ENCODE measurements at regions of chr2 and their contacts with region 1.

Region 1: DNA sequence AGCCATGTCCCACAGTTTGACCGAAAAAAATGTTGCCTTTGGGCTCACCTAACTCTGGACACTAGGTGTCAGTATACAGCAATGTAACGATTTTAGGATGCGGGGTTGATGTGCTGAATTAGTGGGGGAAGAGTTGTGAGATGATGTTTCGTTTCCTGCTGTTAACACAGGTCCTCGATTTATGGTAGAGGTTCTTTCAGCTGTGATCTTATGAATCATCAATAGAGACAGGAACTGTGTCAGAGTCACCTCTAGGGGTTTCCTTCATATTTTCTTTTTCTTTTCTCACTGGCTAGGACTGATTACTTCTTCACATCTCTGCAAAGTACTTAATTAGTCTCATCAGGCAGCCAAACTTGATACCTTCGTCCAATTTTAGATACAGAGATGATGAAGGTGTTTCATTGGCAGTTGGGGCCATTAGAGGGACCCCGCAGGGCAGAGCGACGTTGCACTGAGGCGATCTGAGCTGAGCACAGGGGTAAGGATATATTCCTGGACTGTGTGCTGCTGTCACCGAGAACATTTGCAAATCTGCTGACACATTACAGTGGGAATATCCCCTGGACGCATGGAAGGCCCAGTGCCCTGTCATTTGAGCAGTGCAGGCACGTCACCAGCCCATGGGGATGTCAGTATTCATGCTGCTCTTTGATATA is 10.2 kb upstream of the MMADHC start:
- DNase-seq: peak; percentile 94
- ATAC-seq: peak; percentile 89
- H3K4me3 ChIP-seq: peak overlapping the region; percentile 13; the same call in 1 of the 2 replicates
- H3K27ac ChIP-seq: peak overlapping the region; percentile 64
- H3K4me1 ChIP-seq: peaks cover 8% of the 10 kb centered on the region
- H3K27me3 ChIP-seq: no peaks in the 10 kb centered on the region
- CTCF ChIP-seq: peak; percentile 93
- POLR2A ChIP-seq: 0 out of 2 replicates have a peak, but pooled peaks have one; percentile 40
- RAD21 ChIP-seq: peak; percentile 97

Region 2: DNA sequence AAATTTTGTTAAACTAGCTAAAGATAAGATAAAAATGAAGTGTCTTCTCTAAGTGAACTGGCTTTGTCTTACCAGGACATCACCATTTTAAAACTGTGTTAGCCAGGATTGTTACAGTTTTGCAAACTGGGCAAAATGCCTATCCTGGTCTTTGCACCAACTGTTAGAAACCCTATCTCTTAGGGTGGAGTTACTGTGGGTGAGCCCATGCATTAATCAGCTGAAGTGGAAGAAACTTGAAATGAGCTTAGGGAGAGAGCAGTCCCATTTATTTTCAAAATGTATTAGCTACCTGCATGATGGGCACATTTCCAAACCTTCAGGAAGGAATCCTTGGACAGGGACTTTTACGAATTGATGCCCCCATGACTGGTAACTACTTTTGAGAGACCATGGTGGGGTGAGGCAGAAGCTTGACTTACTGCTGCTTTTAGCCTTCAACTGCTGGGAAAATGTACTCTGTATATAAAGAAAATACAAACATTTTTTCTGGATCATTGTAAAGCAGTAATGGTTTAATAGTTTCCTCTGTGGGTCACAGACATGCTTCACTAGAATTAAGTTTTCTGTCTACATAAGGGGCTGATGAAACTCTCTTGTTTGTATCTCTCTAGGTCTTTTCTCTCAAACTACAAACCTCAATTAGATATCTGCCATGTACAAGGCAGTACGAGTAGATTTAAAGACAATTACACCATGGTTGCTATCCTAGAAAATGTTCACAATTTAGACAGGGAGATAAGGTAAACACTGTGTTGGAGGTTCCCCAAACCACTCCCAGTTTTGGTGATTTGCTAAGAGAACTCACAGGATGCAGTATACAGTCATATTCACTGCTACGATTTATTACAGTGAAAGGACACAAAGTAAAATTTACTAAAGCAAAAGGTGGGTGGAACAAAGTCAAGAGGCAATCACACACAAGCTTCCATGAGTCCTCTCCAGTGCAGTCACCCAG is 311.2 kb after region 1 on chr2:
- CTCF ChIA-PET with region 1: no interaction called
- POLR2A ChIA-PET with region 1: no interaction called
- dilution Hi-C with region 1: no loop called
- in situ Hi-C with region 1: no loop called
- intact Hi-C with region 1: loop called (anchors 10 kb)
- DNase-seq: peak; percentile 81
- ATAC-seq: peak; percentile 96
- H3K4me3 ChIP-seq: no peak overlapping the region
- H3K27ac ChIP-seq: peak overlapping the region; percentile 27; the same call in 1 of the 2 replicates
- H3K4me1 ChIP-seq: peaks cover 9% of the 10 kb centered on the region
- H3K27me3 ChIP-seq: no peaks in the 10 kb centered on the region
- CTCF ChIP-seq: no peak
- POLR2A ChIP-seq: no peak
- RAD21 ChIP-seq: no peak

Region 3: GRCh38 chr2:150125708-150126107 is 527.9 kb after region 1 on chr2:
- CTCF ChIA-PET with region 1: no interaction called
- POLR2A ChIA-PET with region 1: no interaction called
- dilution Hi-C with region 1: no loop called
- in situ Hi-C with region 1: no loop called
- intact Hi-C with region 1: loop called (anchors 10 kb)
- DNase-seq: peak; percentile 86
- ATAC-seq: peak; percentile 65
- H3K4me3 ChIP-seq: no peak overlapping the region
- H3K27ac ChIP-seq: no peak overlapping the region
- H3K4me1 ChIP-seq: peaks cover 13% of the 10 kb centered on the region
- H3K27me3 ChIP-seq: no peaks in the 10 kb centered on the region
- CTCF ChIP-seq: peak; percentile 21; the same call in 1 of the 2 replicates
- POLR2A ChIP-seq: no peak
- RAD21 ChIP-seq: peak; percentile 35; the same call in 1 of the 2 replicates

Region 4: DNA sequence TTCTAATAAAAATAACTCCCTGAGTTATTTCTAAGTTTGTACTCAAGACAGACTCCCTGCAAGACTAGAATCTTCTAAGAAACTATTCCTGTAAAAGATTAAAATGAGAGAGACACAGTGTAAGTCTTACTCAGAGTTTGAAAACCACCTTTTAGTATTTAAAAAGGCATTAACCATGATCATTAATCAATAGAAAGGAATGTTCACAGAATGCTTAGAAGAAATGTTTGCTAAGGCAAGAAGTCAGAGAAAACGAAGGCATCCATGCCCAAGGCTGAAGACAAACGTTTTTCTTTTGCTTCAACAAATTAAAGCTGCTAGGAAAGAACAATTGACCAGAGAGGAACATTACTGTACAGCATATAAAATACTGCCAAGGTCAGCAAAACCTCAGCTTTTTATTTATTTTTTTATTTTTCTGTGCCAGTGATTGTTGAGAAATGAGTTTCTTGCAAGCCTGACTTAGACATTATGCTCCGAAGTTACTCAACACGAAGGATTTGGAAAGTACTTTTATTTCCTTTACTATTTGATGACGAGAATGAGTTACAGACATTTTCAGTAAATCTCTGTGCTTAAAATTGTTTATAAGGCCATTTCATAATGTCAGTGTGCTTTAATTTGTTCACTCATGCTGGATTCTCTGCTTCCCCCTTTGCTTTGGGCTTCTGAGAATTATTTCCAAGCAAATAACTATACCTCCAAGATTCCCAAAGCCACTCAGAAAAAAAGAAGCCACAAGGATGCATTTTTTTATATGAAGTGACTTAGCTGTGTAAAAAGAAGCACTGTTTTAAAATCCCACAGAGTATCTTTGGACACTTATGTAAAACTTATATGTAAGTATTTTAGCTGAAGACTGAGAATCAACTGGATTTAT is 869.2 kb after region 1 on chr2:
- CTCF ChIA-PET with region 1: interaction called, 4 read pairs
- POLR2A ChIA-PET with region 1: no interaction called
- dilution Hi-C with region 1: no loop called
- in situ Hi-C with region 1: loop called (anchors 5 kb)
- intact Hi-C with region 1: loop called (anchors 1 kb)
- DNase-seq: peak; percentile 86
- ATAC-seq: peak; percentile 36
- H3K4me3 ChIP-seq: no peak overlapping the region
- H3K27ac ChIP-seq: peak overlapping the region; percentile 42; the same call in 1 of the 2 replicates
- H3K4me1 ChIP-seq: peaks cover 5% of the 10 kb centered on the region
- H3K27me3 ChIP-seq: no peaks in the 10 kb centered on the region
- CTCF ChIP-seq: no peak
- POLR2A ChIP-seq: peak; percentile 2; the same call in 1 of the 2 replicates
- RAD21 ChIP-seq: no peak

Region 5: DNA sequence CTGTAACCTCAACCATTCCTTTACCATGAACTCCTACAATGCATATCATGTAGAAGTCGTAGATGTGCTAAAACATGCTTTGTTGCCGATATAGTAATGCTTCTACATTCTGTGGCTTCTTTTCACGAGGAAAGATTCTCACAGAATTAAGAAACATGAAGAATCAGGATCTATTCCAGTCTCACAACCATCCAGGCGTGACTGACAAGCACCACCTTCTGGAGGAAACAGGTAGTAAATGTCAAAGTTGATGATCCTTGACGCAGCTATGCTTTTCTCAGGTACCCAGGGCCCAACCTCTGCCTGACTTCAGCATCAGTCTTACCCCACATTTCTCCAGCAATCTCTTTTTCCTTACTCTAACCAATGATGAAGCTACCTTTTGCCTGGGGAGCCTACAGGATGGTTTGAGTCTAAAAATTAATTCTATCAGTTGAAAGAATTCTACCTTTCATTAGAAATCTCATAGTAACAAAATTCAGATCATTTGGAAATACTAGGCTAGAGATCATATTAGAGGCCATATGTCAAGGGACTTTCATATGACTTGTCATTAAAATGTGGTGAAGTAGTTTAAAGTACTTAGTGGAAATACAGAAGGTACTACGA is 1013.0 kb after region 1 on chr2:
- CTCF ChIA-PET with region 1: no interaction called
- POLR2A ChIA-PET with region 1: no interaction called
- dilution Hi-C with region 1: no loop called
- in situ Hi-C with region 1: loop called (anchors 10 kb)
- intact Hi-C with region 1: loop called (anchors 2 kb)
- DNase-seq: peak; percentile 69
- ATAC-seq: peak; percentile 16; the same call in 1 of the 2 replicates
- H3K4me3 ChIP-seq: no peak overlapping the region
- H3K27ac ChIP-seq: peak overlapping the region; percentile 49; the same call in 1 of the 2 replicates
- H3K4me1 ChIP-seq: peaks cover 13% of the 10 kb centered on the region
- H3K27me3 ChIP-seq: no peaks in the 10 kb centered on the region
- CTCF ChIP-seq: peak; percentile 65
- POLR2A ChIP-seq: no peak
- RAD21 ChIP-seq: peak; percentile 87

Region 6: DNA sequence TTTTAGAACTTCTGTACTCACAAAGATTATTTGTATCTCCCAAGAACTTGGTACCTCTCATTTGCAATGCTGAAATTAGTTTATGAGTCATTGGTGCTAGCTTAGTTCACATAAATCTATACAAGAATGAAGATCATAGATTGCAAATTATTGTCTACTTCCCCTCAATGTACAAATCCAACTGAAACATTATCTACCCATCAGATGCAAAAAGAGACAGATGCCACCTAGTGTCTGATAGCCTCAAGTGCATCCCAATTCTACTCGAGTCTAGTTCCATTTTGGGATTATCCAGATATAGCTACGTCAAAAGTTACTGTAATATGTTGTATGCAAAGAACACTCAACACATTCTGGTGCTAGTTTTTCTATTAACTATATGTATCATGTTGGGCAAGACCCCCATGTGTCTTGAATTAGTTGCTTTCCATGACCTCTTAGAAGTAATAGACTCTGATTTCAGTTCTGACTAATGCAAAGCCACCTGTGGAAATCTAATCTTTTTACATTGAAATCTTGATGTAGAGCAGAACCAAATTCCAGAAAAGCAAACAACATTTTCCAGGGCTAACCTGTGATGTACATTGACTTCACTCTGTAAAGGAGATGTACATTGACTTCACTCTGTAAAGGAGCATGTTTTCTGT is 1453.9 kb after region 1 on chr2:
- CTCF ChIA-PET with region 1: interaction called, 3 read pairs
- POLR2A ChIA-PET with region 1: no interaction called
- dilution Hi-C with region 1: no loop called
- in situ Hi-C with region 1: loop called (anchors 25 kb)
- intact Hi-C with region 1: loop called (anchors 10 kb)
- DNase-seq: peak; percentile 67
- ATAC-seq: peak; percentile 71
- H3K4me3 ChIP-seq: no peak overlapping the region
- H3K27ac ChIP-seq: no peak overlapping the region
- H3K4me1 ChIP-seq: peaks cover 2% of the 10 kb centered on the region; the same call in 1 of the 2 replicates
- H3K27me3 ChIP-seq: no peaks in the 10 kb centered on the region
- CTCF ChIP-seq: peak; percentile 71
- POLR2A ChIP-seq: no peak
- RAD21 ChIP-seq: peak; percentile 71

Measured in IMR-90 (cell line).